ENCODE measurements at regions of chr12 and their contacts with region 1.

Region 1: DNA sequence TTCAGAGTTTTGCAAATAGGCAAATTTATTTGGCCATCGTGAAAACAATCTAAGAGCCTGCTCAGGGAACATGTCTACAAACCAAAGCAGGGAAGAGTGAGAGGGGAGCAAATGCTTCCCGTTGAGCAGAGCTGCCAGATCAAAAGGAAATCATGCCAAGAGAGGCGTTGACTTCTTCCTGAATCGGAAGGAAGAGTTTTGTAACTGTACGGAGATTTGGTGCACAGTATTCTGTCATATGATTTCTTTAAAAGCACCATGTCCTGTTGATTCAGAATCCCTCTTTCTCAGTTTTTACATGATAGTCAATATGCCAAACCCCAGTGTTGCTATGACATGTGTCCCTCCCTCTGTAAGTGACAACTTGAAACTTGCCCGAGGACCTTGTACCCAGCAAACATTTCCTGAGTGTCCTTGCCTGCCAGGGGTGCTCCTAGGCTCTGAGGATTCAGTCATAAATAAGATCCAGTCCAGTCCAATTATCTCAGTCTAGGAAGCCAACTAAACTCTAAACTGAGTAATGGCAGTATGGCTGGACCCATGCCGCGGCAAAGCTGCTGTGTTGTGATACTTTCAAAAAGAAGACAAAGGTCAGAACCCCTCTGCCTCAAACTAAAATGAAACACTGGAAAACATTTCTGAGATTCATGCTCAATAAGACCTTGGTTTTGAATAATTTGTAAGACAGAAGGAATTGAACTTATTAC is 300.1 kb upstream of the FKBP4 start:
- DNase-seq: peak in 4 of 5 donors; percentile 46 to 71 (median 64)
- ATAC-seq: peak; percentile 40 to 63 (median 58)
- H3K4me3 ChIP-seq: no peak overlapping the region
- H3K27ac ChIP-seq: peak overlapping the region; percentile 15 to 81 (median 75)
- H3K4me1 ChIP-seq: peaks cover 22 to 82% (median 64%) of the 10 kb centered on the region in 12 donors
- H3K27me3 ChIP-seq: no peaks in the 10 kb centered on the region
- CTCF ChIP-seq: no peak
- POLR2A ChIP-seq: no peak

Region 2: GRCh38 chr12:2198005-2198501 is 296.6 kb before region 1 on chr12:
- intact Hi-C with region 1: no loop called
- DNase-seq: peak in 4 of 5 donors; percentile 34 to 66 (median 44)
- ATAC-seq: peak; percentile 17 to 75 (median 66)
- H3K4me3 ChIP-seq: no peak overlapping the region
- H3K27ac ChIP-seq: peak overlapping the region in 8 of 12 donors; percentile 22 to 55 (median 45)
- H3K4me1 ChIP-seq: peaks cover 0 to 68% (median 39%) of the 10 kb centered on the region in 12 donors
- H3K27me3 ChIP-seq: no peaks in the 10 kb centered on the region
- CTCF ChIP-seq: no peak
- POLR2A ChIP-seq: no peak

Region 3: GRCh38 chr12:2324387-2324786 is 170.3 kb before region 1 on chr12:
- intact Hi-C with region 1: loop called in 1 of 10 experiments (anchors 10 kb)
- DNase-seq: peak in 1 of 5 donors; percentile 36
- ATAC-seq: peak in 3 of 4 donors; percentile 10 to 20 (median 19)
- H3K4me3 ChIP-seq: no peak overlapping the region
- H3K27ac ChIP-seq: peak overlapping the region in 11 of 12 donors; percentile 46 to 86 (median 69)
- H3K4me1 ChIP-seq: peaks cover 8 to 79% (median 59%) of the 10 kb centered on the region in 12 donors
- H3K27me3 ChIP-seq: no peaks in the 10 kb centered on the region
- CTCF ChIP-seq: no peak
- POLR2A ChIP-seq: no peak

Region 4: DNA sequence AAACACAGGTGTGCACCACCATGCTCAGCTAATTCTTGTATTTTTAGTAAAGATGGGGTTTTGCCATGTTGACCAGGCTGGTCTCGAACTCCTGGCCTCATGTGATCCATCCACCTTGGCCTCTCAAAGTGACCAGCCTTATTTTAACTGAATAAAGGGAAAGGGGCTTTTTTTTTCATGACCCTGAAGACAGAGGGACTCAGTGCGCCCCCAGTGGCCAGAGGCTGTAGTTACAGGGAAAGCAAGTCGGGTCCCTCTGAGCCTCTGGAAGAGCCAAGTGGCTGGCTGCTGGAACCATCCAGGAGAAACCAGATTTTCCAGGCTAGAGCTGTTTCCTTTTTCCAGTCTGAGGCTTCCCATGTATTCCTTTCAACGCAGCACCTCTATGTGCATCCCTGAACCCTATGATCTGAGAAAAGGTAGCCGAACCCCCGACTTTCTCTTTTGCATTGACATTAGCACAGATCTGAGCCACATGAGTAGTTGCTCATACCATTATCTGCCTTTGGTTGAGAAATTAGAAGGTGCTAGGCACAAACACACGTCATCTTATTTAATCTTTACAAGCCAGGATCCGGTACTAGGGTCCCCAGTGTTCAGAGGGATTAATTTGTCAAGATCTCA is 99.2 kb before region 1 on chr12:
- intact Hi-C with region 1: loop called in 1 of 10 experiments (anchors 5 kb)
- DNase-seq: peak in 4 of 5 donors; percentile 42 to 73 (median 50)
- ATAC-seq: no peak
- H3K4me3 ChIP-seq: no peak overlapping the region
- H3K27ac ChIP-seq: peak overlapping the region in 11 of 12 donors; percentile 12 to 77 (median 47)
- H3K4me1 ChIP-seq: peaks cover 3 to 65% (median 30%) of the 10 kb centered on the region in 12 donors
- H3K27me3 ChIP-seq: no peaks in the 10 kb centered on the region
- CTCF ChIP-seq: peak; percentile 65 to 86 (median 78)
- POLR2A ChIP-seq: no peak

Region 5: GRCh38 chr12:2456813-2457186 is 37.8 kb before region 1 on chr12:
- intact Hi-C with region 1: loop called in 2 of 10 experiments (anchors 5 kb)
- DNase-seq: no peak
- ATAC-seq: no peak
- H3K4me3 ChIP-seq: no peak overlapping the region
- H3K27ac ChIP-seq: peak overlapping the region; percentile 54 to 87 (median 78)
- H3K4me1 ChIP-seq: peaks cover 4 to 46% (median 22%) of the 10 kb centered on the region in 12 donors
- H3K27me3 ChIP-seq: no peaks in the 10 kb centered on the region
- CTCF ChIP-seq: no peak
- POLR2A ChIP-seq: no peak

Region 6: GRCh38 chr12:2561367-2561766 is 66.7 kb after region 1 on chr12:
- intact Hi-C with region 1: loop called in 2 of 10 experiments (anchors 5 kb)
- DNase-seq: no peak
- ATAC-seq: peak in 2 of 4 donors; percentile 21 to 23
- H3K4me3 ChIP-seq: no peak overlapping the region
- H3K27ac ChIP-seq: peak overlapping the region in 9 of 12 donors; percentile 2 to 66 (median 24)
- H3K4me1 ChIP-seq: peaks cover 0 to 35% (median 14%) of the 10 kb centered on the region in 12 donors
- H3K27me3 ChIP-seq: no peaks in the 10 kb centered on the region
- CTCF ChIP-seq: no peak
- POLR2A ChIP-seq: no peak